ENCODE measurements at regions of chr6 and their contacts with region 1.

Region 1: DNA sequence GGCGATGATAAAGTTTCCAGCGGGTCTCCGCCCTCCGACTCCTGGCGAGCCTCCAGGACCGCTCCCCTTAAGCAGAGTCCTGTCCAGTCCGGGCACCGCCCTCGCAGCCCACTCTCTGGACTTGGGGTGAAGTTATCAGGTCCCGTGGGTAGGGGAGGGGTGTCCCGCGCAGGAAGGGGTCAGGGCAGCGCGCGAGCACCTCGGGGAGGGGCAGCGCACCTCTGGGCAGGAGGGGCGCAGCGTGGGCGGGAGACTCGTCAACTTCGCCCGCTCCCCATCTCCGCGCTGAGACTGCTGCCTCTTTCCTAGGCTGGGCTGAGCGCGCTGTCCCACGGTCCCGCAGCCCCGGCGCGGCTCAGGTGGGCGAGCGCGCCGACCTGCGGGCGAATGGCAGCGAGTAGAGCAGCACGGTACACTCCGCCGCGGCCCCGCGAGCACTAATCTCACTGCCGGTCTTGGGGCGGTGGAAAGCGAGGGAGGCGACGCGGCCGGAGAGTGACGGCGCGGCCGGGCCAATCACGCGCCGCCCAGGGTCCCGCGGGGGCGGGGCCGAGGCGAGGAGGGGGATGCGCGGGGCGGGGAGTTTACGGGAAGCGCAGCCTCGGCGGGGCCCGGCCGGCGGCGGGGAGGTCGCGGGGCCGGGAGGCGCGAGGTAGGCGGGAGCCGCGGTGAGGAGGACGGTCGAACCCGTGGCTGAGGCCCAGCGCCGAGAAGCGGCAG is at the start of gene MAN1A1:
- DNase-seq: peak; percentile 97
- total RNA-seq, gene MAN1A1: 60.6 to 65.3 TPM

Region 2: DNA sequence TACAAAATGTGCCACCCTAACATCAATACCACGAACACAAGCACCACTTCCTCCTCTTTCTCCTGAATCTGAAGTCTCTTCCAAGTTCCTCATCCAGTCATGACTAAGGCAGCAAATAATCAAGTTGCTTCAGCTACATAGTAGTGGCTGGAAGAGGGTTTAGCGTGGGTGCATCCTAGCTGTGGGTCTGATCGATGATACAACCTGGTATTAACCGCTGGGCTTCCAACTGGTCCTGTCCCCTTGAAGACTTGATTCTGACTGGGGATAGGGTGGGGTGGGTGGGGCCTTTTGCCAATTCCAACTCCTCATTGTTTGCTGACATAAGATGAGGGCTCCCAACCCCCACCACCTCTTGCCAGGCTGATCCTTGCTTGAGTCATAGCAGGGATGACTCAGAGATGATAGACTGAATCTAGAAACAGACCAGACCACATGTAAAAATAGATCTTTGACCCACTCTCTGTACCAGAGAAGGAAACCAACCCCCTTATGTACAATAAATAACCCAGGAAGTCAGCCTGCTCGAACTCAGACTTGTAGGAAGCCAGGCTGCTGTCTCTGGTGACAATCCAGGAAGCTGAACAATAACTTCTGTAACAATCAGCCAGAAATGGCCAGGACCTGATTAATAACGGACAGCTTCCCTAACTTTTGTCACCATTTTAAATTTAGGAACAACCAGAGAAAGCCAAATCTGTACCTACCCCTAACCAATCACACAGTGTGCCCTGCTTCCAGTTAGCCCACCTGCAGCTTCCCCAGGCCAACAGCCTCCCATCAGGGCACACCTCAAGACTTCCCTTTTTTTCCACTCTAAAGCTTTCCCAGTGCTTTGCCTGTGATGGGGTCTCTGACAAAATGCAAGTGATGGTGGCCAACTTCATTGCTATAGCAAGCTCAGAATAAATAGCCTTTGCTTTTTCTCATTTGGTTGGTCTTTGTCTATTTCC is 202.1 kb before region 1 on chr6:
- intact Hi-C with region 1: loop called in 1 of 2 experiments (anchors 5 kb)
- DNase-seq: peak; percentile 90